Mammary epithelial cell (primary cell): ENCODE measurements at regions of chr2 and their contacts with region 1.

Region 1: GRCh38 chr2:30072250-30072842 is 74.5 kb upstream of the YPEL5 start:
- DNase-seq: peak; percentile 55
- H3K4me3 ChIP-seq: no peak overlapping the region
- H3K27ac ChIP-seq: no peak overlapping the region
- H3K4me1 ChIP-seq: no peaks in the 10 kb centered on the region
- H3K27me3 ChIP-seq: no peaks in the 10 kb centered on the region
- CTCF ChIP-seq: peak; percentile 82 to 92

Region 2: DNA sequence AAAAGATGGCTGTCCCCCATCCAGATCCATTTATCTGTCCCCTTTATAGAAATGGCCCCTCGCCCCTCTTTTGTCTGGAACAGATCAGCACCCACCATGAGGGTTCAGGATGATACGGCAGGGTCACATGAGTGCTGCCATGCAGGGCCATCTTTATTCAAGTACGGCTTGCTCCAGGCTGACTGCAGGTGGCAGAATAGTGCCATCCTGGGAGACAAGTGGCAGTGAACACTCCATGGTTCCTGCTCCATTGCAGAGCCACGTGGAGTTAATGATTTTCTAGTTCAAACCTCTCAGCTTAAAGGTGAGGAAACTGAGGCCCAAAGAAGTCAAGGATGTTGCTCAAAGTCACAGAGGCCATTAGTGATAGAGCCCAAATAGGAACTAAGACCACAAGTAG is 776.5 kb before region 1 on chr2:
- CTCF ChIA-PET with region 1: no interaction called
- dilution Hi-C with region 1: no loop called
- in situ Hi-C with region 1: no loop called
- intact Hi-C with region 1: loop called (anchors 1 kb)
- DNase-seq: no peak
- H3K4me3 ChIP-seq: no peak overlapping the region
- H3K27ac ChIP-seq: no peak overlapping the region
- H3K4me1 ChIP-seq: no peaks in the 10 kb centered on the region
- H3K27me3 ChIP-seq: no peaks in the 10 kb centered on the region
- CTCF ChIP-seq: peak; percentile 39 to 65

Region 3: DNA sequence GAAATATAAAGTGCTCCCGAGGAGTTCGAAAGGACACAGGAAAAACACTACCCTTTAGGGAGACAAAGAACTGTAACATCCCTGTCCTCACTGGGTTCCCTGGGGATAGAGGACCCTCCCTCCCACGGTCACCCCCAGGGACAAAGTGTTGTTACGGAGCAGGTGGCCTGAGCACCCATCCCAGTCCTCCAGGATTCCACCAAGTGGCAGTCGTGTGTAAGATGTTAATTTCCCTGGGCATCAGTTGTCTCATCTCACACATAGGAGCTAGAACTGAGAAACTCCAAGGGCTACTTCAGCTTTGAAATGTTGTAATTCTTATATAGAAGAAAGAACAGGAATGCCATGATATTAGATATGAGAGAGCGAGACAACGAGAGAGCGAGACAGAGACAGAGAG is 288.7 kb before region 1 on chr2:
- CTCF ChIA-PET with region 1: no interaction called
- dilution Hi-C with region 1: no loop called
- in situ Hi-C with region 1: no loop called
- intact Hi-C with region 1: loop called (anchors 2 kb)
- DNase-seq: no peak
- H3K4me3 ChIP-seq: no peak overlapping the region
- H3K27ac ChIP-seq: no peak overlapping the region
- H3K4me1 ChIP-seq: no peaks in the 10 kb centered on the region
- H3K27me3 ChIP-seq: no peaks in the 10 kb centered on the region
- CTCF ChIP-seq: no peak

Region 4: DNA sequence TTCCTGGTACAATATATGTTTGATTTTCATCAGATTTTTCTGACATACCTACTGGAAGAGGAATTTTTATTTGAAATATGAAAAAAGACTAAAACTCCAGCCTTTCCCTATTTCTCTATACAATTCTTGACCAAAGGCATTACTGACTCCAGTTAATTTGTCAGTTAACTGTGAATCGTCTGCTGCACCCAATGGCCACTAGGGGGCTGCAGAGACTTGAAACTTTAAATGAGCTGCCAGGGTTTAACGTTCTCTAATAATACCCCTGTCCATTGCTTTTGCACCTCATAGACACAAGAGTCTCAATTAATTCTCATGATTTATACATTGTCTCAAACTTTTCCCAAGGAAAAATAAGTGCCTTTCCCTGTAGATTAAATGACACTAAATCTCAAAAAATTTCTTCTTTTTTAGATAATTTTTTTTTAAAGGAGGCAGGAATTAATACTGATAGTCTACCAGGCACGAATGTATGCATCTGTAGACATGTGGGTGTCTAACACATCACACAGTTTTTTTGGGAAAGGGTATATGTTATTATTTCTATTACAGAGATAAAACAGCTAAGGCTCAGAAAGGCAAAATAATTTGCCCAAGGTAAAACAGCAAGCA is 149.1 kb before region 1 on chr2:
- CTCF ChIA-PET with region 1: interaction called, 9 read pairs
- dilution Hi-C with region 1: no loop called
- in situ Hi-C with region 1: loop called (anchors 5 to 10 kb)
- intact Hi-C with region 1: loop called (anchors 1 kb)
- DNase-seq: peak; percentile 39
- H3K4me3 ChIP-seq: no peak overlapping the region
- H3K27ac ChIP-seq: no peak overlapping the region
- H3K4me1 ChIP-seq: peaks cover 6% of the 10 kb centered on the region
- H3K27me3 ChIP-seq: peaks cover 25% of the 10 kb centered on the region
- CTCF ChIP-seq: peak; percentile 92 to 93

Region 5: GRCh38 chr2:30185186-30185585 is 112.8 kb after region 1 on chr2:
- CTCF ChIA-PET with region 1: no interaction called
- dilution Hi-C with region 1: no loop called
- in situ Hi-C with region 1: no loop called
- intact Hi-C with region 1: no loop called
- DNase-seq: peak; percentile 47
- H3K4me3 ChIP-seq: no peak overlapping the region
- H3K27ac ChIP-seq: no peak overlapping the region
- H3K4me1 ChIP-seq: no peaks in the 10 kb centered on the region
- H3K27me3 ChIP-seq: peaks cover 4% of the 10 kb centered on the region
- CTCF ChIP-seq: no peak

Region 6: DNA sequence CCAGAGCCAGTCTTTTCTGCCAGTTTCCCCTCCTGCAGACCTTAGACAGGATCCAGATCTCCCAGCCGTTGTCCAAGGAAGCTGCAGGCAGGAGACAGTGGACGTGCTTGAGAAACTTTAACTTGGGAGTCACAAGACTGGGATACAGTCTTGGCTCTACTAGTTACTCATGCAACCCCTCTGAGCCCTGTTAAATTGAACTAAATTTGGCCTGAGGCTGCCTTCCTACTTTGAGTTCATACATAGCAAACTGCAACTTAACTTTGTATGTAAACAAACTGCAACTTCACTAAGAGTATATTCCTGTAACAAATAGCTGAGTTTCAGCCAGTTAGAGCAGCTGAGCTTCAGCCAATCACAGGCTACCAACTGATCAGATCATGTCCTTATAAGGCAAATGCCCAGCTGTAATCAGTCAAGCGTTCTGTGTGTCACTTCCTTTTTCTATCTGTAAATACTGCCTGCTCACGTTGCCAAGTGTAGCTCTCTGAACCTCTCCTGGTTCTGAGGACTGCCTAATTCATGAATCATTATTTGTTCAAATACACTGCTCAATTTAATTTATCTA is 594.0 kb after region 1 on chr2:
- CTCF ChIA-PET with region 1: no interaction called
- dilution Hi-C with region 1: no loop called
- in situ Hi-C with region 1: no loop called
- intact Hi-C with region 1: no loop called
- DNase-seq: peak; percentile 94
- H3K4me3 ChIP-seq: no peak overlapping the region
- H3K27ac ChIP-seq: peak overlapping the region; percentile 89
- H3K4me1 ChIP-seq: peaks cover 25% of the 10 kb centered on the region
- H3K27me3 ChIP-seq: no peaks in the 10 kb centered on the region
- CTCF ChIP-seq: no peak